Naive thymus-derived CD4-positive, alpha-beta T cell (primary cell): ENCODE measurements at regions of chr1 and their contacts with region 1.

Region 1: GRCh38 chr1:6554031-6554906 is at the start of gene NOL9:
- DNase-seq: peak; percentile 90 to 97 (median 93)
- ATAC-seq: peak; percentile 100
- H3K4me3 ChIP-seq: peak within 1 kb of the TSS; percentile 79
- H3K4me3 Mint-ChIP-seq: peak within 1 kb of the TSS; percentile 77 to 85 (median 80)
- H3K27ac ChIP-seq: peak within 1 kb of the TSS; percentile 83
- H3K27ac Mint-ChIP-seq: peak within 1 kb of the TSS in 8 of 9 donors; percentile 60 to 85 (median 75)
- H3K4me1 ChIP-seq: peaks cover 8 to 20% of the 10 kb centered on the region in 2 donors
- H3K4me1 Mint-ChIP-seq: peaks cover 0 to 25% (median 17%) of the 10 kb centered on the region in 7 donors
- H3K27me3 ChIP-seq: no peaks in the 10 kb centered on the region
- H3K27me3 Mint-ChIP-seq: no peaks in the 10 kb centered on the region
- total RNA-seq, gene NOL9: 54.2 to 80.6 (median 73.8) TPM

Region 2: GRCh38 chr1:6464514-6464836 is 89.8 kb before region 1 on chr1:
- CTCF ChIA-PET with region 1: interaction called, 3 read pairs
- POLR2A ChIA-PET with region 1: interaction called, 12 read pairs
- intact Hi-C with region 1: no loop called
- DNase-seq: no peak
- ATAC-seq: no peak
- H3K4me3 ChIP-seq: peak overlapping the region; percentile 89
- H3K4me3 Mint-ChIP-seq: peak overlapping the region; percentile 89 to 98 (median 92)
- H3K27ac ChIP-seq: peak overlapping the region; percentile 94
- H3K27ac Mint-ChIP-seq: peak overlapping the region; percentile 90 to 99 (median 95)
- H3K4me1 ChIP-seq: peaks cover 31 to 53% of the 10 kb centered on the region in 2 donors
- H3K4me1 Mint-ChIP-seq: peaks cover 23 to 55% (median 49%) of the 10 kb centered on the region in 7 donors
- H3K27me3 ChIP-seq: no peaks in the 10 kb centered on the region
- H3K27me3 Mint-ChIP-seq: peaks cover 0 to 3% (median 0%) of the 10 kb centered on the region in 5 donors

Region 3: DNA sequence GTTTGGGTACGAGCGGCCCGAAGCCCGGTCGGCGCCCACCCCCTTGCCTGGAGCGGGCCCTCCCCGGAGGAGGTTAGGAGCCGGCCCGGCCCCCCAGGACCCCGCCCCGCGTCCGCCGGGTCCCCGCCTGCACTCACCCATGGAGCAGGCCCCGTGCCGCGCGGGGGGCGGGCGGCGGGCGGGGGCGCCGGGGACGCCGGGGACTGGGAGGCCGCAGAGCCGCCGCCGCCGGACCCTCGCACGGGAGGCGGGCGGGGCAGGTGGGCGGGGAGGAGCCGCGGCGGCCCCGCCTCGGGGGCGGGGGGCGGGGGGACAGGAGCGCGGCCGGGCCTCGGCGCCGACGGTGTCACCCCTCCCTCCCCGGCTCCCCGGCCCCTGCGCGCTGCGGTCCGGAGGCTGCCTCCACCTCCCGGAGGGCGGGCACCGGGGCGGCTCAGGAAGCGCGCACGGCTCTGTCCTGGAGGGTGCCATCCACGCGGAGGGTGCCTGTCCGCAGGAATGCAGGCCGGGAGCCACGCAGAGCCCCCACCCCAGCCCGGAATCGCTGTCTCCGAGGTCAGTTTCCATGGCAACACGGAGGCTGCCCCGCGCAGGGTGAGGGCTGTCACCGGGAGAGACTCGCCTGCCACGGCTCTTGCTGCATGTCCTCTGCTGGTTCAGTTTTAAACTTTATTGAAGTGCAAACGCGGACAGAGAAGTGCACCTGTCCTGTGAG is 56.9 kb before region 1 on chr1:
- CTCF ChIA-PET with region 1: interaction called, 32 read pairs
- POLR2A ChIA-PET with region 1: interaction called, 12 read pairs
- intact Hi-C with region 1: no loop called
- DNase-seq: peak in 8 of 9 donors; percentile 33 to 63 (median 58)
- ATAC-seq: peak; percentile 73
- H3K4me3 ChIP-seq: peak overlapping the region; percentile 54
- H3K4me3 Mint-ChIP-seq: peak overlapping the region; percentile 77 to 86 (median 82)
- H3K27ac ChIP-seq: peak overlapping the region; percentile 67
- H3K27ac Mint-ChIP-seq: peak overlapping the region in 6 of 9 donors; percentile 43 to 80 (median 72)
- H3K4me1 ChIP-seq: peaks cover 4 to 24% of the 10 kb centered on the region in 2 donors
- H3K4me1 Mint-ChIP-seq: peaks cover 12 to 45% (median 31%) of the 10 kb centered on the region in 7 donors
- H3K27me3 ChIP-seq: no peaks in the 10 kb centered on the region
- H3K27me3 Mint-ChIP-seq: peaks cover 0 to 36% (median 4%) of the 10 kb centered on the region in 5 donors

Region 4: GRCh38 chr1:6579374-6580118 is 25.3 kb after region 1 on chr1 and contains the start of gene ZBTB48:
- CTCF ChIA-PET with region 1: interaction called, 6 read pairs
- POLR2A ChIA-PET with region 1: interaction called, 21 read pairs
- intact Hi-C with region 1: loop called (anchors 1 kb)
- DNase-seq: peak; percentile 92 to 97 (median 94)
- ATAC-seq: peak; percentile 98
- H3K4me3 ChIP-seq: peak within 1 kb of the TSS; percentile 76
- H3K4me3 Mint-ChIP-seq: peak within 1 kb of the TSS; percentile 76 to 97 (median 96)
- H3K27ac ChIP-seq: peak within 1 kb of the TSS; percentile 91
- H3K27ac Mint-ChIP-seq: peak within 1 kb of the TSS; percentile 88 to 98 (median 95)
- H3K4me1 ChIP-seq: peaks cover 25 to 27% of the 10 kb centered on the region in 2 donors
- H3K4me1 Mint-ChIP-seq: peaks cover 27 to 43% (median 35%) of the 10 kb centered on the region in 7 donors
- H3K27me3 ChIP-seq: no peaks in the 10 kb centered on the region
- H3K27me3 Mint-ChIP-seq: no peaks in the 10 kb centered on the region
- total RNA-seq, gene ZBTB48: 39.1 to 70.4 (median 62.2) TPM

Region 5: DNA sequence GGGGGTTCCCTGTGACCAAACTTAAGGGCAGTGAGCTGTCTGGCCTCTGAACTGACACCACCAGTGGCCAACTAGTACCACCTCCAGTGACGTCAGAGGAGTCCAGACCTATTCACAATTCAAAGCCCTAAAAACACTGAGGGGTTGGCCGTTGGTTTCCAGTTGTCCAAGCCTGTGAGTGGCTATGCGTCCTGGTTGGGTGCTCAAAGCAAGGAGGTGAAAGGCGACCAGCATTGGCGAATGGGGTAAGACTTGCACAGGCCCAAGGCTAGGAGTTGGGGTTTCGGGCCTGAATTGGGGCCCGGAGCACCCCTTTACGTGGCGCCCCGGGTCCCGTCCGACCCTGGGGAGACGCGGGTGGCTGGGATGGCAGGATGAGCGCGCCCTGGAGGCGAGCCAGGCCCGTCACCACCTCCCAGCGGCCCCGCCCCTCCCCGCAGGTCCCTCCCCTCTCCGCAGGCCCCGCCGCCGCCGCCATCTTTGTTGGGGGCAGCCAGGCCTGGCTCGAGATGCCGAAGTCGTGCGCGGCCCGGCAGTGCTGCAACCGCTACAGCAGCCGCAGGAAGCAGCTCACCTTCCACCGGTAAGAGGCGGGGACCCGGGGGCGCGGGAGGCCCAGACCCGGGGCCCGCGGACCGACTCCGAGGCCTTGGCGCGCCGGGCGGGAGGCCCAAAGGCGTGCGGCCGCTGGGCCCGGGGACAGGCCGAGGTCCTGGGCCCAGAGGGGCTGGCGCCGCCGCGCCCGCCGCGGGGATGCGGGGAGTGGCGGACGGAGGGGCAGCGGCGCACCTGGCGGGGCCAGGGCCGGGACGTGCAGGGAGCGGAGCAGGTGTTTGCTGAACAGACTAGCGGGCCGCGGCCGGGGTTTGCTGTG is 70.7 kb after region 1 on chr1 and contains the start of gene THAP3:
- CTCF ChIA-PET with region 1: interaction called, 4 read pairs
- POLR2A ChIA-PET with region 1: interaction called, 4 read pairs
- intact Hi-C with region 1: loop called (anchors 1 kb)
- DNase-seq: peak; percentile 77 to 90 (median 87)
- ATAC-seq: peak; percentile 99
- H3K4me3 ChIP-seq: peak within 1 kb of the TSS; percentile 52
- H3K4me3 Mint-ChIP-seq: peak within 1 kb of the TSS; percentile 86 to 97 (median 92)
- H3K27ac ChIP-seq: peak within 1 kb of the TSS; percentile 78
- H3K27ac Mint-ChIP-seq: peak within 1 kb of the TSS; percentile 72 to 96 (median 86)
- H3K4me1 ChIP-seq: peaks cover 13 to 18% of the 10 kb centered on the region in 2 donors
- H3K4me1 Mint-ChIP-seq: peaks cover 11 to 39% (median 30%) of the 10 kb centered on the region in 7 donors
- H3K27me3 ChIP-seq: no peaks in the 10 kb centered on the region
- H3K27me3 Mint-ChIP-seq: no peaks in the 10 kb centered on the region
- total RNA-seq, gene THAP3: 14.1 to 30.5 (median 20.3) TPM

Region 6: GRCh38 chr1:6701437-6702153 is 147.3 kb after region 1 on chr1 and contains the start of gene DNAJC11:
- CTCF ChIA-PET with region 1: no interaction called
- POLR2A ChIA-PET with region 1: no interaction called
- intact Hi-C with region 1: loop called (anchors 1 kb)
- DNase-seq: peak; percentile 84 to 99 (median 93)
- ATAC-seq: peak; percentile 99
- H3K4me3 ChIP-seq: peak within 1 kb of the TSS; percentile 90
- H3K4me3 Mint-ChIP-seq: peak within 1 kb of the TSS; percentile 87 to 96 (median 93)
- H3K27ac ChIP-seq: peak within 1 kb of the TSS; percentile 92
- H3K27ac Mint-ChIP-seq: peak within 1 kb of the TSS; percentile 77 to 95 (median 92)
- H3K4me1 ChIP-seq: peaks cover 8 to 9% of the 10 kb centered on the region in 2 donors
- H3K4me1 Mint-ChIP-seq: peaks cover 7 to 40% (median 32%) of the 10 kb centered on the region in 7 donors
- H3K27me3 ChIP-seq: no peaks in the 10 kb centered on the region
- H3K27me3 Mint-ChIP-seq: no peaks in the 10 kb centered on the region
- total RNA-seq, gene DNAJC11: 37.2 to 49.7 (median 44.0) TPM

Region 7: DNA sequence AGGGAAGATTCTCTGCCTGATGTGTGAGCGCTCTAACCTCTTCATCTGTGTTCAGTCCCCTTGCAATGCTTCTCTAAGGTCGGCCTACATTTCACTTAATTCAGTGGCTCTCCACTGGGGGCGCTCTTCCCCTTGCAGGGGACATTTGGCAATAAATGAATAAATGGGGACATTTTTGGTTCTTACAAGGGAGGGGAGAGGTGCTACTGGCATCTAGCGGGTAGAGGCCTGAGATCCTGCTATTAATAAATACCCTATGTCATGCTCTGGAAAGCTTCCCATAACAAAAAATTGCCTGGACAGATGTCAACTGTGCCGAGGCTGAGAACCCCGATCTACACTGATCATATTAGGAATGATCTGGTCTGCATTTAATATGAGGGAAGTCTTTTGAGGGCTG is 173.3 kb after region 1 on chr1:
- CTCF ChIA-PET with region 1: no interaction called
- POLR2A ChIA-PET with region 1: no interaction called
- intact Hi-C with region 1: no loop called
- DNase-seq: peak in 7 of 9 donors; percentile 36 to 60 (median 51)
- ATAC-seq: peak; percentile 74
- H3K4me3 ChIP-seq: no peak overlapping the region
- H3K4me3 Mint-ChIP-seq: no peak overlapping the region
- H3K27ac ChIP-seq: no peak overlapping the region
- H3K27ac Mint-ChIP-seq: peak overlapping the region in 1 of 9 donors; percentile 25
- H3K4me1 ChIP-seq: no peaks in the 10 kb centered on the region
- H3K4me1 Mint-ChIP-seq: no peaks in the 10 kb centered on the region
- H3K27me3 ChIP-seq: no peaks in the 10 kb centered on the region
- H3K27me3 Mint-ChIP-seq: peaks cover 6 to 10% (median 6%) of the 10 kb centered on the region in 5 donors

Region 8: DNA sequence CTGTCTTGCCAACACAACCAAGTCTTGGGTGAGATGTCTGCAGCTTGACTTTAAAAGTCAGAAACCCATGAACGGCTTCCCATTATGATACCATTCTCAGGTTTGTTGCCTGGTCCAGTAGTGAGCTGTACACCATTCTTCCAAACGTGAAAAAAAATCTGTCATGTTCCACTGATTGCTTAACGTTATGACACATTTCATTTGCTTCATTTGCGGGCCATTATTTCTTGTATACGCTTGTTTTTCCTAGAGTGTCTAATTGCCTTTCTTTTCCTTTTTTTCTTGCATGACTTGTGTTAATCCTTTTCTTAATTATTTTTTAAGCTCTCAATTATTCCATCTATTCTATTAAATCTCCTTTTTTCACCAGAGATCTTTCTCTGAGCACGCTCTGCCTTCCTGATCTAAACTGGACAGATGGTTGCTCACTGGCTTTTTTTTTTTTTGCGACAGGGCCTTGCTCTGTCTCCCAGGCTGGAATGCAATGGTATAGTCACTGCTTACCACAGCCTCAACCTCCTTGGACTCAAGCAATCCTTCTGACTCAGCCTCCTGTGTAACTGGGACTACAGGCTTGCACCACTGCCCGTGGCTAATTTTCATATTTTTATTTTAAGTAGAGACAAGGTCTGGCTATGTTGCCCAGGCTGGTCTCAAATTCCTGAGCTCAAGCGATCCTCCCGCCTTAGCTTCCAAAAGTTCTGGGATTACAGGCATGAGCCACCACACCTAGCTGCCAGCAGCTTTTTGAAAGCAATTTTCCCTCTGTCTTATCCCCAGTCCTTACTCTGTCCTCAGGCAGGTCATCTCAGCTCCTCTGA is 199.3 kb after region 1 on chr1:
- CTCF ChIA-PET with region 1: no interaction called
- POLR2A ChIA-PET with region 1: no interaction called
- intact Hi-C with region 1: no loop called
- DNase-seq: no peak
- ATAC-seq: no peak
- H3K4me3 ChIP-seq: no peak overlapping the region
- H3K4me3 Mint-ChIP-seq: no peak overlapping the region
- H3K27ac ChIP-seq: no peak overlapping the region
- H3K27ac Mint-ChIP-seq: no peak overlapping the region
- H3K4me1 ChIP-seq: no peaks in the 10 kb centered on the region
- H3K4me1 Mint-ChIP-seq: peaks cover 0 to 8% (median 0%) of the 10 kb centered on the region in 7 donors
- H3K27me3 ChIP-seq: peaks cover 0 to 3% of the 10 kb centered on the region in 2 donors
- H3K27me3 Mint-ChIP-seq: peaks cover 21 to 31% (median 28%) of the 10 kb centered on the region in 5 donors